Pancreas (tissue), 10 donors: ENCODE measurements at regions of chr15 and their contacts with region 1.

Region 1: DNA sequence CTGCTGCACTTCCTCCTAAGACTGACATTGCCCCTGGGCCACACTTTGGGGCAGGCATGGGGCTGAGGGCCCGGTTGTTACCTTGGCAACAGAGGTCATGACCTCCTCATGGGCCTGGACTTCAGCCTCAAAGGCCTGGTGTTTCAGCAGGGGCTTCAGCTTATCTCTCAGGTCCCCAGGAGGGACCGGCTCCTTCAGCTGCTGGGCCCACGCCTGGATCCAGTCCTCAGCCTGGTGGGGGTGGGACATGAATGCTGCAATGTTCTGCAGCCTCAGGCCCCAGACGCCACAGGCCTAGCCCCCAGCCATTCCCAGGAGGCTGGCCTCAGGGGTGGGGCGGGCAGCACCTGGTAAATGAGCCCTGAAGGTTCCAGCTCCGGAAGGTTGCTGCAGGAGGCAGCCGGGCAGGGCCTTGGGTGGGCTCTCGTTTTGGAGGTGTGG is 27.6 kb downstream of the SPTBN5 start:
- DNase-seq: peak in 1 of 6 donors; percentile 51
- ATAC-seq: no peak
- H3K4me3 ChIP-seq: no peak overlapping the region
- H3K27ac ChIP-seq: no peak overlapping the region
- H3K4me1 ChIP-seq: no peaks in the 10 kb centered on the region
- H3K27me3 ChIP-seq: no peaks in the 10 kb centered on the region
- CTCF ChIP-seq: no peak

Region 2: GRCh38 chr15:41832875-41833274 is 33.4 kb before region 1 on chr15:
- intact Hi-C with region 1: loop called in 1 of 3 experiments (anchors 5 kb)
- DNase-seq: no peak
- ATAC-seq: no peak
- H3K4me3 ChIP-seq: no peak overlapping the region
- H3K27ac ChIP-seq: no peak overlapping the region
- H3K4me1 ChIP-seq: peaks cover 0 to 7% (median 6%) of the 10 kb centered on the region in 3 donors
- H3K27me3 ChIP-seq: no peaks in the 10 kb centered on the region
- CTCF ChIP-seq: no peak

Region 3: GRCh38 chr15:42010434-42010833 is 144.2 kb after region 1 on chr15:
- intact Hi-C with region 1: no loop called
- DNase-seq: no peak
- ATAC-seq: peak in 2 of 4 donors; percentile 36 to 55
- H3K4me3 ChIP-seq: no peak overlapping the region
- H3K27ac ChIP-seq: peak overlapping the region in 2 of 4 donors; percentile 31 to 37
- H3K4me1 ChIP-seq: peaks cover 0 to 13% (median 0%) of the 10 kb centered on the region in 3 donors
- H3K27me3 ChIP-seq: no peaks in the 10 kb centered on the region
- CTCF ChIP-seq: no peak